ENCODE measurements at regions of chr14 and their contacts with region 1.

Region 1: DNA sequence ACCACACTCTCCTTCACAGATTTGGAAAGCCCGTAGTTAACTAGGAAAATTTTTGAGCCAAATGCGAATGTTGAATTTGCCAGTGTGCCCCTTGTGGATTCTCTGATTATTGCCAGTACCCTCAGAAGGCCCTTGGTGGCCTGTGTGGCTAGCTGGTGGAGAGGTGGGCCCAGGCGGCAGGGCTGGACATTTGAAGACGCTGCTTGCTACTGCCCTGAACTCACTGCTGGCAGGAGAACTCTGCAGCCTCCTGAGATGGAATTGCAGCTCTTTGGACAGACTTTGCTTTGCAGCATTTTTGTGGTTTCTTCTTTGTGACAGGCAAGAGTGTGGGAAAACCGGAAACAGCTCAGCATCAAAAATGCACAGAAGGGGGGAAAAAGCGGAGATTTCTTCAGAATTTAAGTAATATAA is 97.6 kb downstream of the TGFB3 start:
- DNase-seq: no peak
- ATAC-seq: peak in 2 of 4 donors; percentile 16 to 24
- H3K4me3 ChIP-seq: no peak overlapping the region
- H3K27ac ChIP-seq: peak overlapping the region in 4 of 12 donors; percentile 1 to 49 (median 6)
- H3K4me1 ChIP-seq: peaks cover 0 to 31% (median 0%) of the 10 kb centered on the region in 12 donors
- H3K27me3 ChIP-seq: no peaks in the 10 kb centered on the region
- CTCF ChIP-seq: peak in 6 of 12 donors; percentile 7 to 34 (median 18)
- POLR2A ChIP-seq: no peak

Region 2: DNA sequence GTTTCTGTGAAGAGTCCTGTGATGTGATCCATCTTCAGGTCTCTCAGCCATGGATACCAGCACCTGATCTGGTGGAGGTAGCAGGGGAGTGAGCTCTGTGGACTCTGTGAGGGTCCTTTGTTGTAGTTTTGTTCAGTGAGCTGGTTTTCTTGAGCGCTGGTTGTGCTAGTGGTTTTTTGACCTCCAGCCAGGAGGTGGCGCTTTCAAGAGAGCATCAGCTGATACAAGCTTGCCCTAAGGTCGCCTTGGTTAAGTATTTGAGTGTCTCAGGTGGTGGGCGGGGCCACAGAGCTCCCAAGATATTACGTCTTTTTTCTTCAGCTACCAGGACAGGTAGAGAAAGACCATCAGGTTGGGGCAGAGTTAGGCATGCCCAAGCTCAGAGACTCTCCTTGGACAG is 83.4 kb before region 1 on chr14:
- intact Hi-C with region 1: loop called in 1 of 10 experiments (anchors 5 kb)
- DNase-seq: no peak
- ATAC-seq: no peak
- H3K4me3 ChIP-seq: no peak overlapping the region
- H3K27ac ChIP-seq: no peak overlapping the region
- H3K4me1 ChIP-seq: peaks cover 0 to 26% (median 12%) of the 10 kb centered on the region in 12 donors
- H3K27me3 ChIP-seq: no peaks in the 10 kb centered on the region
- CTCF ChIP-seq: no peak
- POLR2A ChIP-seq: no peak

Region 3: GRCh38 chr14:75864352-75864751 is 19.9 kb before region 1 on chr14:
- intact Hi-C with region 1: no loop called
- DNase-seq: no peak
- ATAC-seq: no peak
- H3K4me3 ChIP-seq: no peak overlapping the region
- H3K27ac ChIP-seq: no peak overlapping the region
- H3K4me1 ChIP-seq: peaks cover 0 to 45% (median 25%) of the 10 kb centered on the region in 12 donors
- H3K27me3 ChIP-seq: no peaks in the 10 kb centered on the region
- CTCF ChIP-seq: no peak
- POLR2A ChIP-seq: no peak

Region 4: DNA sequence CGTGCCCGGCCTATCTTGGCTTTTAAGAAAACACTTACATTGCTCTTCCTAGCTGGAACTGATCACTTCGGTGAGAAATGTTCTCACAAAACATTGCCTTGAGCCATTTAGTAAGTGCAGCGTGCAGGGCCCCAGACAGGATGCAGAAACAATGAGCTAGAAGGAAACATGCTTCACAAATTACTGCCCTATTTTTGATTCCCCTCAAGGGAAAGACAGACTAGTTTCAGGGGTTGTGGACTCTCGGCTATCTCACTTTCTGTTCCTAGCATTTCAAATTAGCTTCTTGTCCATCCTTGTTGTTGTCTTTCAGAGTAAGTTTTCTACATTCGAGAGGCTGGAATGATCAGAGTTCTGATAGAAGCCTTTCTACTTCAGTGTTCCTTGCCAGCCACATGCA is 76.0 kb after region 1 on chr14:
- intact Hi-C with region 1: no loop called
- DNase-seq: no peak
- ATAC-seq: no peak
- H3K4me3 ChIP-seq: no peak overlapping the region
- H3K27ac ChIP-seq: no peak overlapping the region
- H3K4me1 ChIP-seq: no peaks in the 10 kb centered on the region
- H3K27me3 ChIP-seq: no peaks in the 10 kb centered on the region
- CTCF ChIP-seq: no peak
- POLR2A ChIP-seq: no peak